ENCODE measurements at regions of chr3 and their contacts with region 1.

Region 1: DNA sequence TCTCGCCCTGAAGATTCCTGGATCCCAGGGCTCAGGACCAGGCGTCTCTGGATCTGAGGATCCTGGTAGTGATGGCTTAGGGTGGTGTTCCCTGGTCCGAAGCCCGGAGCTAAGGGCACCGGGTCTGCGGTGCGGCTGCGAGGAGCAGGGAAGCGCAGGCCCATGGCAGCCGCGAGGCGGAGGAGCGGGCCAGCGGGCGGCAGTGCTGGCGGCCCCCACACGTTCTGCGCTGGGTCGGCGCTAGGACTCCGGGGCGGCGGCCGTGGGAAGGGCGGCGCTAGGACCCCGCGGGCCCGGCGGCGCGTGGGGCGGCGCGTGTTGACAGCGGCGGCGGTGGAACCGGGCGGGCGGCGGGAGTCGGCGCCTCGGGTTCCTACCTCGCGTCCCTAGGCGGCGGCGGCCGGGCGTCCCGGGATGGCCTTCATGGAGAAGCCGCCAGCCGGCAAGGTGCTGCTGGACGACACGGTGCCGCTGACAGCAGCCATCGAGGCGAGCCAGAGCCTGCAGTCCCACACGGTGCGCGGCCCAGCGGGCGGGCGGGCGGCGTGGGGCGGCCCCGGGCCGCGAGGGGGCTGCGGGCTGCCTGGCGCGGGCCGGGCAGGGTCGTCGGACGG is at the start of gene PXK:
- DNase-seq: peak; percentile 86
- H3K4me3 Mint-ChIP-seq: peak within 1 kb of the TSS; percentile 99
- H3K27ac Mint-ChIP-seq: peak within 1 kb of the TSS; percentile 82
- H3K4me1 Mint-ChIP-seq: peaks cover 28% of the 10 kb centered on the region
- H3K27me3 Mint-ChIP-seq: no peaks in the 10 kb centered on the region
- total RNA-seq, gene PXK: 40.9 to 45.4 TPM

Region 2: GRCh38 chr3:58013973-58014649 is 318.6 kb before region 1 on chr3:
- CTCF ChIA-PET with region 1: no interaction called
- POLR2A ChIA-PET with region 1: no interaction called
- intact Hi-C with region 1: no loop called
- DNase-seq: no peak
- H3K4me3 Mint-ChIP-seq: no peak overlapping the region
- H3K27ac Mint-ChIP-seq: no peak overlapping the region
- H3K4me1 Mint-ChIP-seq: peaks cover 27% of the 10 kb centered on the region
- H3K27me3 Mint-ChIP-seq: no peaks in the 10 kb centered on the region

Region 3: DNA sequence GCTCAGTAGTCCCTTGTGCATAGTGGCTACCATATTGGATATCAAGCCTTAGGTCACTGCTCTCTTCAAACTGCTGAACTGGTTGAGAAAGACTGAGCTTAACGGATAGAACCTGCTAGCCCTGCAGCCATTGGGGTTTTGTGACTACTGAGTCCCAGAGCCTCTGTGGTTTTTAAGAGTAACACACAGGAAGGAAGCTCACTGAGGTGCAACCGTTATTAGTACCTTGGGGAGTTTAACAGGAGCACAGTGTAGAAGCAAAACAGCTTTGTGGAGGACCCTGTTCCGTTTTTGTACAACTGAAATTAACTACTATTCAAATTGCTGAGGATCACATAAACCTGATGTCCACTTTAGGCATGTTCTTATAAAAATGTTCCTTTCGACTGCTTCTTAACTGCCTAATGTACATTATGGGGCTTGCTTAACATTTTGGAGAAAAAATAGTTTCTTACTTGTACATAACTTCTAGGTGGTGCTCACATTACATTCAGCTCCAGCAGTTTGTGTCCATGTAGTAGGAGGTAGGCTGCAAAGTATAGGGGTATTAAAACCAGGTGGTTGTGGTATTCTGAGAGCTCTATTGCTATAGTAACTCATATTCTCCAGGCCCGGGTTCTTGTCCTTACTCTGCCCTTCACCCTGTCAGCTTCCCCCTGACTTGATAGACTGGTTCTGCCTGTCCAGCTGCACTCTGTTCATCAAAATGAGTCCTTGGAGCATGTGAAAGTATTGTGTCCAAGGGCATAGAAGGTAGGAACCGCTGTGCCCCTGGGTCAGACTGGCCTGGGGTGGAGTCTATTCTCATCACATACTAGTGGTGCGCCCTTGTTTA is 17.3 kb after region 1 on chr3:
- CTCF ChIA-PET with region 1: interaction called, 5 read pairs
- POLR2A ChIA-PET with region 1: interaction called, 6 read pairs
- intact Hi-C with region 1: loop called (anchors 1 kb)
- DNase-seq: no peak
- H3K4me3 Mint-ChIP-seq: no peak overlapping the region
- H3K27ac Mint-ChIP-seq: no peak overlapping the region
- H3K4me1 Mint-ChIP-seq: peaks cover 45% of the 10 kb centered on the region
- H3K27me3 Mint-ChIP-seq: no peaks in the 10 kb centered on the region

Region 4: DNA sequence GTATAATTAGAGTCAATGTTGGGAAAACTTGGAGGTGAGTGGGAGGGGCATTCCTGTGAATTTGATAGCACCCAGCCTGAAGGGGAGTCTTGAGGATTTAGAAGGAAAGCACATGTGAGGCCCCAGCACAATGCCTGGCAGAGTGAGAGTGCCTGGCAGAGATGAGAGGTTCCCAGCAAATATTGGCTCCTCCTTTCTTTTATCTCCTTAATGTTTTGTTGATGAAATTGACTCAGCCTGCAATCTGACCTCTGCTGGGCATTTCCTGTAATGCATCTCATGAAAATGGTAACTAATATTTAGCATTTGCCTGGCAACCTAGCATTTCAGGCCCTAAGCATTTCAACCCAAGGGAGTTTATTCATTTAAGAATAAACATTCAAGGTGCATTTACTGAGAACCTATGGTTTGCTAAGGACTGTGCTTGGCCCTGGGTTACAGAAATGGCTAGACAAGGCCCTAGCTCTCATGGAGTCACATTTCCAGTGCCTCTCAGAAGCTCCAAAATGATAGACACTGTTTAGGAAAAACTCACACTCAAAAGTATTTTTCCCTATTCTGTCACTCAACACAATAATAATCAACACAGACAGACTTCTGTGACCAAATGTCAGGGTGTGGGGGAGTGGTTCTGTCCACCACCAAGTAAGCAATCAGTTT is 82.0 kb after region 1 on chr3:
- CTCF ChIA-PET with region 1: interaction called, 16 read pairs
- POLR2A ChIA-PET with region 1: interaction called, 5 read pairs
- intact Hi-C with region 1: loop called (anchors 1 kb)
- DNase-seq: peak; percentile 48
- H3K4me3 Mint-ChIP-seq: no peak overlapping the region
- H3K27ac Mint-ChIP-seq: no peak overlapping the region
- H3K4me1 Mint-ChIP-seq: peaks cover 3% of the 10 kb centered on the region
- H3K27me3 Mint-ChIP-seq: no peaks in the 10 kb centered on the region

Region 5: GRCh38 chr3:58433400-58434169 is 100.9 kb after region 1 on chr3 and contains the start of gene PDHB:
- CTCF ChIA-PET with region 1: no interaction called
- POLR2A ChIA-PET with region 1: no interaction called
- intact Hi-C with region 1: loop called (anchors 1 kb)
- DNase-seq: peak; percentile 93
- H3K4me3 Mint-ChIP-seq: peak within 1 kb of the TSS; percentile 92
- H3K27ac Mint-ChIP-seq: peak within 1 kb of the TSS; percentile 91
- H3K4me1 Mint-ChIP-seq: peaks cover 24% of the 10 kb centered on the region
- H3K27me3 Mint-ChIP-seq: no peaks in the 10 kb centered on the region
- total RNA-seq, gene PDHB: 55.6 to 56.3 TPM

Region 6: GRCh38 chr3:58471025-58471887 is 138.6 kb after region 1 on chr3:
- CTCF ChIA-PET with region 1: no interaction called
- POLR2A ChIA-PET with region 1: no interaction called
- intact Hi-C with region 1: loop called (anchors 2 kb)
- DNase-seq: peak; percentile 80
- H3K4me3 Mint-ChIP-seq: no peak overlapping the region
- H3K27ac Mint-ChIP-seq: peak overlapping the region; percentile 86
- H3K4me1 Mint-ChIP-seq: peaks cover 34% of the 10 kb centered on the region
- H3K27me3 Mint-ChIP-seq: no peaks in the 10 kb centered on the region

Region 7: GRCh38 chr3:58491506-58492402 is 159.1 kb after region 1 on chr3 and contains the start of gene KCTD6:
- CTCF ChIA-PET with region 1: interaction called, 8 read pairs
- POLR2A ChIA-PET with region 1: no interaction called
- intact Hi-C with region 1: loop called (anchors 2 kb)
- DNase-seq: peak; percentile 90
- H3K4me3 Mint-ChIP-seq: peak within 1 kb of the TSS; percentile 90
- H3K27ac Mint-ChIP-seq: peak within 1 kb of the TSS; percentile 77
- H3K4me1 Mint-ChIP-seq: peaks cover 52% of the 10 kb centered on the region
- H3K27me3 Mint-ChIP-seq: peaks cover 3% of the 10 kb centered on the region
- total RNA-seq, gene KCTD6: 8.0 to 8.6 TPM